HEK293 (cell line): ENCODE measurements at regions of chr7 and their contacts with region 1.

Region 1: GRCh38 chr7:104643587-104644217 is 315.3 kb downstream of the LHFPL3 start:
- H3K4me3 ChIP-seq: no peak overlapping the region
- H3K27ac ChIP-seq: no peak overlapping the region
- H3K4me1 ChIP-seq: no peaks in the 10 kb centered on the region
- CTCF ChIP-seq: no peak

Region 2: DNA sequence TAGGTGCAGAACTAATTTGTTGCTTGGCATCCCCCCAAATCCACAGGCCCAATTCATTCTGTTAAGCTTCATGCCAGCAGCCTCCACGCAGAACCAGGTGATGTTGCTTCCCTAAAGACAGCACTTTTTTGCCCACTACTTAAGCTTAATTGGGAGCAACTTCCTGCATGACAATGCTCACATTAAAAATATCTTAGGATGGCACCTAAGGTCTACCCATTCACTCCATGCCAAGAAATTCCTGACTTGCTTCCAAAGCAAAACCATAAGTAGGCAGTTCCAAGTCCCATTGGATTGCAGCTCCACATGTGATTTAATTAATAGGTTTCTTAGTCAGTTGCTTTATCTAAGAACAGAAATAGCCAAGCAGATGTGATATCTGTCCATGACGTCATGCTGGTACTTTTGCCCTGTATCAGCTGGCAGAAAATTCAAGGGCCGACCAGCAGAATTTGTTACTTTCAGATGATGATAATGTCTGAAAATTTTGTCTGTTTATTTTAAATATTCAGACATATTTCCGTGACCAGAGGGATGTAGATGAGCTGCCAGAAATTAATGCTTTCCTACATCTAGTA is 10.2 kb after region 1 on chr7:
- CTCF ChIA-PET with region 1: interaction called, 15 read pairs
- POLR2A ChIA-PET with region 1: no interaction called
- H3K4me3 ChIP-seq: no peak overlapping the region
- H3K27ac ChIP-seq: no peak overlapping the region
- H3K4me1 ChIP-seq: no peaks in the 10 kb centered on the region
- CTCF ChIP-seq: no peak

Region 3: DNA sequence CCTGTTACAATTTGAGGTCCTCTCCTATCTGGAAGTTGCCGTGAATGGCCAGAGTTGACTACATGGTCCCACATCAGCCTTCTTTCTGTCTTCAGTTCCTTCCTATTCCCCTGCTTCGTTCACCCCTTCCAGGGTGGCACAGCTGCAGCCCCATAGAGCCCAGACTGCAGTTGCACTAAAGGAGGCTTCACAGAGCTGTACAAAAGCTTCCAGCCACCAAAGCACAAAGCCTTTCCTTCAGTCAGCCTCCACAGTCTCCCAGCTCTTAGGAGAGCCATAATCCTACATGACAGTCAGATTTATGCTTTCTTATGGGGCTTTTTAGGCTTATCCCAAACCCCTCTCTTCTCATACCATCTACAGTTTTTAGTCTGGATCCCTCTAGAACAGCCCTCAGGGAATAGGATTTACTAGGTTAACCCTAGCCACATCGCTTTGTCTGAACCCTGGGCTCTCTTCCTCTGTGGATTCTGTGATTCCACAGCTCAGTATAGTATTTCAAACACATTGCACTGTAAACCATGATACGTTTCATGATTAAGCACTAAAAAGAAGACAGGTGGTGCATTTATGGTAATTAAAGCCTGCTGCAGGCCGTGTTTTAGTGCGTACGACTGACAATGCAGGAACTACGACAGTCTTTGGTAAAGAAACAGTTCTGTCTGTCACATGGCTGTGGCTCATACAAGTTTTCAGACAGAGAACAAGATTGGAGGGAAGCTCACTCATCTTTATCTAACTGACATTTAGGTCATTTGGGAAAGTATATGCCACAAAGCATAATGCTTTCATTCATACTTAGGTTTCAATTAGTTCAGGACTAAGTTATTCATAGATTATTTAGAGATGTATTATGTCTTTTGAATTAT is 162.0 kb after region 1 on chr7:
- CTCF ChIA-PET with region 1: no interaction called
- POLR2A ChIA-PET with region 1: no interaction called
- H3K4me3 ChIP-seq: no peak overlapping the region
- H3K27ac ChIP-seq: no peak overlapping the region
- H3K4me1 ChIP-seq: no peaks in the 10 kb centered on the region
- CTCF ChIP-seq: no peak

Region 4: DNA sequence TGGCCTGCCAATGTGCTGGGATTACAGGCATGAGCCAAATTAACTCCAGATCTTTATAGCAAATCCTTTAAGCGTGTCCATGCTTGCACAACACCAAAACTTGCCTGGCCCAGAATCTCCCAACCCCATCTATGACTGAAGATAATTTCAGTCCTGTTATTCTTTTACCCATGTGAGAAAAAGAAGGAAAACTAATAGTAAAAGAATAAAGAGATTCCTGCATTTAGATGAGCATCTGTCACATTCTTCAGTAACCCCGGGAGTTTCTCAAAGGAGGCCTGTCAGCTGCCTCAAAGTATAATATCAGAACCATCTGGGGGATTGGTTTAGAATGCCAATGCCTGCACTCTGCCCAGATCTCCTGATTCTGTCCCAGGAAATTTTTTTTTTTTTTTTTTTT is 212.2 kb after region 1 on chr7:
- CTCF ChIA-PET with region 1: interaction called, 12 read pairs
- POLR2A ChIA-PET with region 1: no interaction called
- H3K4me3 ChIP-seq: no peak overlapping the region
- H3K27ac ChIP-seq: no peak overlapping the region
- H3K4me1 ChIP-seq: no peaks in the 10 kb centered on the region
- CTCF ChIP-seq: no peak